ENCODE measurements at regions of chr5 and their contacts with region 1.

Region 1: DNA sequence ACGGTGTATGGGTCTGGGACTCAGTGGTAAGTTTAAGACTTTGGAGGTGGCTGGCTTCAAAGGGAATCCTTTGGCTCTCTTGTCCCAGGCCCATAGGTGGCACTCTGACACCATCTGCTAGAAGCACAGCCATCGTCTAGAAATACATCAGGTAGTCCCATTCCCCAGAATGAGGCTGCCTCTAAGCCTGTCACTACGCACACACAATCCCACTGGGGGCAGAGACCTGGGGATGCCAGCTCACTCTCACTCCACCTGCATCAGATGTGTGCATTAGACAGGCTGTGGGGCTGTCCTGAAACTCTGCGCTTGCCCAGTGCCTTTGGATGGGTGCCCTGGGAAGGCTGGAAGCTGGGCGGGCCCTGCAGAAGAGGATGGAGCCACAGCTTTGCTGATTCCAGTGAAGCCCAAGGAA is 127.5 kb upstream of the PANK3 start:
- DNase-seq: no peak
- ATAC-seq: peak; percentile 84

Region 2: DNA sequence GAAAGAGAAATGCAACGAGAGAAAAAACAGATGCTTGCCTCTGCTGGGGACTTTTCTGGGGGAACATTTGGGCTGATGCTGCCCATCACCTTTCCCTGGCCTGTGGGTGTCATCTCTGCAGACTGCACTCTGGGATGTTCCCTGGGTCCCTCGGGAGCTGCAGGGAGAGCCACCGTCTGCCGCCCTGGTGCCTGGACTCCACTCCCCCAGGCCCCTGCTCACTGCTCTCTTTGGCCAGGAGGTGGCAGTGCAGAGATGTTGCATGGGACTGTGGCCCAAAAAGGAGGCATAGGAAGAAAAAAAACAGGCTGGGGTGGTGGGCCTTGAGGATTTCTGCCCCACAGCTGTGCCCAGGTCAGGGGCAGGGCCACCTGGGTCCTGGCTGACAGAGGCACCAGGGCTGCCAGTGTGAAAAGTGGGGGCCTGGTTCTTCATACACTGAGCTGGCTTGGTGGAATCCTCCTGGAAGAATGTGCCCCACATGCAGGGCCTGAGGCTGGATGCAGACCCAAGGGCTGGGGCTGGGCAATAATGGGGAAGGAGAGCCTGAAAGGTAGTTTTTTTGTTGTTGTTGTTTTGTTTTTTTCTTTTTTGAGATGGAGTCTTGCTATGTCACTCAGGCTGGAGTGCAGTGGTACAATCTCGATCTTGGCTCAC is 240.7 kb after region 1 on chr5:
- intact Hi-C with region 1: loop called (anchors 10 kb)
- DNase-seq: peak; percentile 53
- ATAC-seq: peak; percentile 68

Measured in Right ventricle myocardium superior (tissue), 1 donor.